Prostate gland (tissue), 2 donors: ENCODE measurements at regions of chr16 and their contacts with region 1.

Region 1: GRCh38 chr16:66751303-66751991 is at the start of gene DYNC1LI2:
- DNase-seq: peak; percentile 58
- H3K4me3 ChIP-seq: peak within 1 kb of the TSS; percentile 93 to 96
- H3K27ac ChIP-seq: peak within 1 kb of the TSS; percentile 89 to 92
- H3K4me1 ChIP-seq: peaks cover 3% of the 10 kb centered on the region
- H3K27me3 ChIP-seq: no peaks in the 10 kb centered on the region
- CTCF ChIP-seq: peak; percentile 85 to 97 (median 90)
- POLR2A ChIP-seq: peak; percentile 30
- total RNA-seq, gene DYNC1LI2: 98.1 to 149 TPM

Region 2: DNA sequence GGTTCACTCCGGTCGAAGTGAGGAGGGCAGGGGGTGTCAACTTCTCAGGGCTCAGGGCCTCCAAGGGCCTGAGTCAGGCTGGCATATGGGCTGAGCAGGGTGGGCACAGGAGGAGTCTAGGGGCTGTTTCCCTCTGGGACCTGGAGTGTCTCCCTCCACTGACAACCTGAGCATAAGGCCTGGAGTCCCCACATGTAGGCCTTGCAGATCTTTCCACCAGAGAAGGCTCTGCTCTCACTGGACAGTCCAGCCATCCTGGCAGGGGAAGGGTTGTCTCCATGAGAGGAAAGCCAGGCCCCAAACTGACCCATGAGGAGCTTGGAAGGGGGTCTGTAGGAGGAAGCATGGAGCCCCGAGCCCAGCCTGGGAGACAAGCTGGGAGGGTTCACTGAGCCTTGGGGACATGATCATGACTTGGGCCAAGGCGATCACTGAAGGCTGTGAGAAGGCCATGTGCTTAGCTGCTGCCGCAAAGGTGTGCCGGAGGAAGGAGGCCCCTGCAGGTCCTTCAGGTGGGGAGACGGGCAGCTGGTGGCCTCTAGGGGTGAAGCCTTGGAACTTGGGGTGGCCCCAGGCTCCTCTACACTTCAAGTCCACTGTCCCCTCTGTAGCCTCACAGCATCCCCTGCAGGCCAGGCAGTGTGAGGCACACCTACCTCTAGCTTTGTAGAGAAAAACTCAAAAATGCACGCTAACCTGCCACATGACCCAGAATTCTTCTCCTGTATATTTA is 162.3 kb before region 1 on chr16:
- intact Hi-C with region 1: no loop called
- DNase-seq: no peak
- H3K4me3 ChIP-seq: no peak overlapping the region
- H3K27ac ChIP-seq: no peak overlapping the region
- H3K4me1 ChIP-seq: no peaks in the 10 kb centered on the region
- H3K27me3 ChIP-seq: no peaks in the 10 kb centered on the region
- CTCF ChIP-seq: peak in 2 of 4 experiments; percentile 46 to 48
- POLR2A ChIP-seq: no peak

Region 3: GRCh38 chr16:66608241-66609138 is 143.0 kb before region 1 on chr16:
- intact Hi-C with region 1: loop called (anchors 5 kb)
- DNase-seq: peak; percentile 90
- H3K4me3 ChIP-seq: no peak overlapping the region
- H3K27ac ChIP-seq: no peak overlapping the region
- H3K4me1 ChIP-seq: peaks cover 3% of the 10 kb centered on the region
- H3K27me3 ChIP-seq: no peaks in the 10 kb centered on the region
- CTCF ChIP-seq: peak; percentile 86 to 92 (median 90)
- POLR2A ChIP-seq: no peak

Region 4: GRCh38 chr16:66728117-66728787 is 23.2 kb before region 1 on chr16:
- intact Hi-C with region 1: loop called (anchors 2 kb)
- DNase-seq: peak; percentile 39
- H3K4me3 ChIP-seq: no peak overlapping the region
- H3K27ac ChIP-seq: peak overlapping the region in 1 of 2 donors; percentile 3
- H3K4me1 ChIP-seq: no peaks in the 10 kb centered on the region
- H3K27me3 ChIP-seq: no peaks in the 10 kb centered on the region
- CTCF ChIP-seq: peak; percentile 36 to 84 (median 74)
- POLR2A ChIP-seq: no peak

Region 5: GRCh38 chr16:66905633-66906539 is 154.4 kb after region 1 on chr16:
- intact Hi-C with region 1: no loop called
- DNase-seq: no peak
- H3K4me3 ChIP-seq: no peak overlapping the region
- H3K27ac ChIP-seq: no peak overlapping the region
- H3K4me1 ChIP-seq: no peaks in the 10 kb centered on the region
- H3K27me3 ChIP-seq: no peaks in the 10 kb centered on the region
- CTCF ChIP-seq: no peak
- POLR2A ChIP-seq: no peak

Region 6: DNA sequence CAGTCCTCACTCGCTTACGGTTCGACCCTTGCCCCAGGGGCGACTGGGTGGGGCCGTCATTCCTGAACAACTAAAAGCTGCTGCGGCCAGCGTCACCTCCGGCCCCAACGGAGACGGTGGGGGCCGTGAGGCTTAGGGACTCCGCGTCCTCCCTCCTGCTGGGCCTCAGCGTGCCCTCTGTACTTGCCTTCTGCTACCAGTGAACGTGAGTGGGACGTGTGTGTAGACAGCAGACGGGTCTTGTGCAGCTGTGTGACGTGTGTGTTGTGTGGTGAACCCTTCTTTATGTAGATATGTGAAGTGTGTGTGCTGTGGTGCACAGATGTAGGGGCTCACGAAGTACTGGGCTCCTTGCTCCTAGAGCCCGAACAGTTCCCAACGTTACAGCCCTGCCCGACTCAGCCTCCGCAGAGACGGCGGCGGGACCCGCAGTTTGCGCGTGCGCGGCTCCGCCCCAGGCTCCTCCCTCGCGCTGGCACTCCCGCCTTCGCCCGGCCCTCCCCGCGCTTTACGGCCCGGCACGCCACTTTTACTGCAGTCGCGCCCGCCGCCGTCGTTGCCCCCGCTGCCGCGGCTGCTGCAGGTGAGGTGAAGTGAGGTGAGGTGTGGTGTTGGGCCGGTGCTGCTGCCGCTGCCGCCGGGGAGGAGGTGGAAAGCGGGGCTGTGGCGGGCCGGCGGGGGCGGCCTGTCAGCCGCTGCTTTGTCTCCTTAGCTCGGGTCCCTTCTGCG is 358.1 kb after region 1 on chr16 and contains the start of gene PHAF1:
- intact Hi-C with region 1: no loop called
- DNase-seq: peak; percentile 95
- H3K4me3 ChIP-seq: peak within 1 kb of the TSS; percentile 85 to 99
- H3K27ac ChIP-seq: peak within 1 kb of the TSS; percentile 73 to 89
- H3K4me1 ChIP-seq: peaks cover 5% of the 10 kb centered on the region
- H3K27me3 ChIP-seq: no peaks in the 10 kb centered on the region
- CTCF ChIP-seq: peak in 2 of 4 experiments; percentile 26 to 28
- POLR2A ChIP-seq: peak; percentile 93
- total RNA-seq, gene PHAF1: 30.1 to 31.9 TPM